MCF 10A (cell line): ENCODE measurements at regions of chr1 and their contacts with region 1.

Region 1: DNA sequence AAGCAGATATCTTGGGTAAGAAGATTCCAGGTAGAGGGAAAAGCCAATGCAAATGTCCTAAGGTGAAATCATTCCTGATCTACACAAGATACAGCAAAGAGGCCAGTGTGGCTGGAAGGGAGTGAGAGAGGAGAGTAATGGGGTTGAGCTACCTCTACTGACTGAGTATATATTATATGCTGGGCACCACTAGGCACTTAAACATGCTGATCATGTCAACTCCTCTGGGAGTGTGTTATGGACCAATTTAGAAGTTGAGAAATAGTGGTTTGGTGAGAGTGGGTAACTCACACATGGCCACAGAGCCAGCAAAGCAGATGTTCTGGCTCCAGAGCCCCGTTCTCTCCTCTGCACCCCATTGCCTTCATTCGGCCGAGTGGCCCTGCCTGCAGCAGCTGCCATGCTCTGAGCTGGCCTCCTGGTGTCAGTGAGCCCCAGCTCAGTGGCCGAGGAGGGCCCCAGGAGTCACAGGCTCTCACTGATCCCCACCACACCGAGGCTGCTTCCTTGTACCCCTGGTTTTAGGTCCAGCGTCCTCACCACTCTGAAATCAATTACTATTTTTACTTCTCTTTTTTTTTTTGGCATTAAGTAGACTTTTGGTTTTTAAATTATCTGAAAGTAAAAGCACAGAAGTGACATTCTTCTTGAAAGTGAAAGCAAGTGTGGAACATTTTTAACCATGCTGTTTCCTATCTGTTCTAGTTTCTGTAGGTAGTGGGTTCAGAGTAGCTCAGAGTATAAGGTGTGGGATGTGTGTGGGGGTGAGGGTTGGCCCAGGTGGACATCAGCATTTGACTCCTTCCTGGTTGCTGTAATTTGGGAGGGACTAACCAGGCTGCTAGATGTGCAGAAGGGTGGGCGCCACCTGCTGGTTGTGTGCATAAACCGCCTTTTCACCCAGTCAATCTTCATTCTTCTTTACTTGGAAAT is 45.8 kb upstream of the CRNN start:
- DNase-seq: peak; percentile 85
- H3K4me3 Mint-ChIP-seq: no peak overlapping the region
- H3K27ac Mint-ChIP-seq: no peak overlapping the region
- H3K4me1 Mint-ChIP-seq: peaks cover 17% of the 10 kb centered on the region
- H3K27me3 Mint-ChIP-seq: no peaks in the 10 kb centered on the region
- CTCF ChIP-seq: peak; percentile 87

Region 2: DNA sequence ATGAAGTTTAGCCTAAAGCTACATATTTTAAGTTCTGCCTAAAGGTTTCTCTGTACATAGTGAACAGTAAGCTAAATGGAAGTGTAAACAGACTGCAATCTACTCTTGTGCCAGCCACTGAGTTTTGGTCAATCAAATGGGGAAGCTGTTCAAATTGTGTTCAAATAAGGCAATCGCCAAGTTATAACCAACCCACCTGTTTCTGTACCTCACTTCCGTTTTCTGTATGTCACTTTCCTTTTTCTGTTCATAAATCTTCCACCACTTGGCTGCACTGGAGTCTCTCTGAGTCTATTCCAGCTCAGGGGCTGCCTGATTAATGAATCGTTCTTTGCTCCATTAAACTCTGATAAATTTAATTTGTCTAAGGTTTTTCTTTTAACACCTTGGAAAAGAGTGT is 539.7 kb before region 1 on chr1:
- CTCF ChIA-PET with region 1: no interaction called
- POLR2A ChIA-PET with region 1: no interaction called
- intact Hi-C with region 1: no loop called
- DNase-seq: no peak
- H3K4me3 Mint-ChIP-seq: no peak overlapping the region
- H3K27ac Mint-ChIP-seq: no peak overlapping the region
- H3K4me1 Mint-ChIP-seq: peaks cover 5% of the 10 kb centered on the region
- H3K27me3 Mint-ChIP-seq: no peaks in the 10 kb centered on the region
- CTCF ChIP-seq: no peak

Region 3: GRCh38 chr1:152001391-152002249 is 458.2 kb before region 1 on chr1:
- CTCF ChIA-PET with region 1: interaction called, 36 read pairs
- POLR2A ChIA-PET with region 1: no interaction called
- intact Hi-C with region 1: no loop called
- DNase-seq: peak; percentile 96
- H3K4me3 Mint-ChIP-seq: peak overlapping the region; percentile 28
- H3K27ac Mint-ChIP-seq: peak overlapping the region; percentile 33
- H3K4me1 Mint-ChIP-seq: peaks cover 55% of the 10 kb centered on the region
- H3K27me3 Mint-ChIP-seq: no peaks in the 10 kb centered on the region
- CTCF ChIP-seq: peak; percentile 98

Region 4: GRCh38 chr1:152167835-152168519 is 291.9 kb before region 1 on chr1:
- CTCF ChIA-PET with region 1: interaction called, 19 read pairs
- POLR2A ChIA-PET with region 1: interaction called, 6 read pairs
- intact Hi-C with region 1: no loop called
- DNase-seq: peak; percentile 100
- H3K4me3 Mint-ChIP-seq: peak overlapping the region; percentile 49
- H3K27ac Mint-ChIP-seq: peak overlapping the region; percentile 99
- H3K4me1 Mint-ChIP-seq: peaks cover 70% of the 10 kb centered on the region
- H3K27me3 Mint-ChIP-seq: no peaks in the 10 kb centered on the region
- CTCF ChIP-seq: no peak

Region 5: GRCh38 chr1:152198982-152199381 is 260.9 kb before region 1 on chr1:
- CTCF ChIA-PET with region 1: interaction called, 12 read pairs
- POLR2A ChIA-PET with region 1: no interaction called
- intact Hi-C with region 1: no loop called
- DNase-seq: no peak
- H3K4me3 Mint-ChIP-seq: no peak overlapping the region
- H3K27ac Mint-ChIP-seq: no peak overlapping the region
- H3K4me1 Mint-ChIP-seq: no peaks in the 10 kb centered on the region
- H3K27me3 Mint-ChIP-seq: peaks cover 32% of the 10 kb centered on the region
- CTCF ChIP-seq: no peak

Region 6: DNA sequence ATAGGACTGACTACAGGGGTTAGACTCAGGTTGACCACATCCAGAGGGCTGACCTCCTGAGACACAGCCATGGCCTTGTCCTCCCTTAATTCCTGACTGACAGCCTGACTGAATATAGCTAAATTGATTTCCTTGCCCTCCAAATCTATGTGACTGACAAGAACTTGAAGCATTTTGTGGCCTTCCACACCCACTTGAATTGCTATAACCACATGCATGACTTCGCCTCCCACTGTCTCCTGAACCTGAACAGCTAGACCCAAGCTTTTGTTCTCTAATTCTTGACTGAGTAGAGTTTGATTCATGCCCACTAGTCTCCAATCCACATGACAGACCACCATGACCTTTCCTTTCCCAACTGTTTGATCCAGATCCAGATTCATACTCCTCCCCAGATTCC is 103.1 kb before region 1 on chr1:
- CTCF ChIA-PET with region 1: interaction called, 17 read pairs
- POLR2A ChIA-PET with region 1: no interaction called
- intact Hi-C with region 1: no loop called
- DNase-seq: no peak
- H3K4me3 Mint-ChIP-seq: no peak overlapping the region
- H3K27ac Mint-ChIP-seq: no peak overlapping the region
- H3K4me1 Mint-ChIP-seq: no peaks in the 10 kb centered on the region
- H3K27me3 Mint-ChIP-seq: peaks cover 15% of the 10 kb centered on the region
- CTCF ChIP-seq: no peak

Region 7: GRCh38 chr1:152440635-152441471 is 19.0 kb before region 1 on chr1:
- CTCF ChIA-PET with region 1: interaction called, 88 read pairs
- POLR2A ChIA-PET with region 1: interaction called, 11 read pairs
- intact Hi-C with region 1: no loop called
- DNase-seq: peak; percentile 89
- H3K4me3 Mint-ChIP-seq: no peak overlapping the region
- H3K27ac Mint-ChIP-seq: no peak overlapping the region
- H3K4me1 Mint-ChIP-seq: peaks cover 24% of the 10 kb centered on the region
- H3K27me3 Mint-ChIP-seq: no peaks in the 10 kb centered on the region
- CTCF ChIP-seq: peak; percentile 91

Region 8: GRCh38 chr1:152502496-152503180 is 42.8 kb after region 1 on chr1:
- CTCF ChIA-PET with region 1: interaction called, 12 read pairs
- POLR2A ChIA-PET with region 1: no interaction called
- intact Hi-C with region 1: no loop called
- DNase-seq: peak; percentile 93
- H3K4me3 Mint-ChIP-seq: no peak overlapping the region
- H3K27ac Mint-ChIP-seq: peak overlapping the region; percentile 60
- H3K4me1 Mint-ChIP-seq: peaks cover 36% of the 10 kb centered on the region
- H3K27me3 Mint-ChIP-seq: no peaks in the 10 kb centered on the region
- CTCF ChIP-seq: no peak